Activated naive CD4-positive, alpha-beta T cell treated with anti-CD3 and anti-CD28 coated beads for 36 hours (primary cell): ENCODE measurements at regions of chr6 and their contacts with region 1.

Region 1: GRCh38 chr6:52162940-52163908 is 23.0 kb upstream of the IL17A start:
- DNase-seq: peak; percentile 30
- H3K4me3 Mint-ChIP-seq: no peak overlapping the region
- H3K27ac Mint-ChIP-seq: peak overlapping the region; percentile 55
- H3K4me1 Mint-ChIP-seq: peaks cover 34% of the 10 kb centered on the region
- H3K27me3 Mint-ChIP-seq: peaks cover 18% of the 10 kb centered on the region

Region 2: GRCh38 chr6:52201046-52201445 is 37.8 kb after region 1 on chr6:
- CTCF ChIA-PET with region 1: interaction called, 3 read pairs
- intact Hi-C with region 1: loop called (anchors 1 kb)
- DNase-seq: no peak
- H3K4me3 Mint-ChIP-seq: no peak overlapping the region
- H3K27ac Mint-ChIP-seq: no peak overlapping the region
- H3K4me1 Mint-ChIP-seq: peaks cover 13% of the 10 kb centered on the region
- H3K27me3 Mint-ChIP-seq: peaks cover 15% of the 10 kb centered on the region

Region 3: GRCh38 chr6:52254731-52255378 is 91.6 kb after region 1 on chr6:
- CTCF ChIA-PET with region 1: interaction called, 115 read pairs
- intact Hi-C with region 1: loop called (anchors 1 kb)
- DNase-seq: peak; percentile 37
- H3K4me3 Mint-ChIP-seq: no peak overlapping the region
- H3K27ac Mint-ChIP-seq: no peak overlapping the region
- H3K4me1 Mint-ChIP-seq: peaks cover 43% of the 10 kb centered on the region
- H3K27me3 Mint-ChIP-seq: peaks cover 10% of the 10 kb centered on the region

Region 4: GRCh38 chr6:52361945-52362442 is 198.8 kb after region 1 on chr6 and contains the start of gene PAQR8:
- CTCF ChIA-PET with region 1: no interaction called
- intact Hi-C with region 1: loop called (anchors 1 kb)
- DNase-seq: peak; percentile 81
- H3K4me3 Mint-ChIP-seq: peak within 1 kb of the TSS; percentile 94
- H3K27ac Mint-ChIP-seq: peak within 1 kb of the TSS; percentile 91
- H3K4me1 Mint-ChIP-seq: peaks cover 38% of the 10 kb centered on the region
- H3K27me3 Mint-ChIP-seq: no peaks in the 10 kb centered on the region
- total RNA-seq, gene PAQR8: 6.8 to 9.2 TPM

Region 5: GRCh38 chr6:52577022-52577777 is 414.0 kb after region 1 on chr6 and contains the start of gene TRAM2:
- CTCF ChIA-PET with region 1: no interaction called
- intact Hi-C with region 1: loop called (anchors 1 kb)
- DNase-seq: peak; percentile 65
- H3K4me3 Mint-ChIP-seq: peak within 1 kb of the TSS; percentile 78
- H3K27ac Mint-ChIP-seq: peak within 1 kb of the TSS; percentile 65
- H3K4me1 Mint-ChIP-seq: peaks cover 43% of the 10 kb centered on the region
- H3K27me3 Mint-ChIP-seq: no peaks in the 10 kb centered on the region
- total RNA-seq, gene TRAM2: 2.5 to 2.9 TPM

Region 6: GRCh38 chr6:52995913-52996645 is 832.9 kb after region 1 on chr6:
- CTCF ChIA-PET with region 1: no interaction called
- intact Hi-C with region 1: loop called (anchors 5 kb)
- DNase-seq: peak; percentile 54
- H3K4me3 Mint-ChIP-seq: peak overlapping the region; percentile 98
- H3K27ac Mint-ChIP-seq: peak overlapping the region; percentile 99
- H3K4me1 Mint-ChIP-seq: peaks cover 29% of the 10 kb centered on the region
- H3K27me3 Mint-ChIP-seq: peaks cover 13% of the 10 kb centered on the region